CD4-positive, alpha-beta memory T cell (primary cell): ENCODE measurements at regions of chr15 and their contacts with region 1.

Region 1: GRCh38 chr15:85412956-85413854 is 32.8 kb downstream of the AKAP13 start:
- DNase-seq: peak; percentile 45 to 86 (median 54)
- H3K4me3 ChIP-seq: no peak overlapping the region
- H3K4me3 Mint-ChIP-seq: peak overlapping the region in 7 of 8 donors; percentile 47 to 87 (median 65)
- H3K27ac ChIP-seq: peak overlapping the region; percentile 40
- H3K27ac Mint-ChIP-seq: peak overlapping the region; percentile 78 to 96 (median 92)
- H3K4me1 ChIP-seq: peaks cover 32% of the 10 kb centered on the region
- H3K4me1 Mint-ChIP-seq: peaks cover 50 to 75% (median 58%) of the 10 kb centered on the region in 4 donors
- H3K27me3 ChIP-seq: no peaks in the 10 kb centered on the region
- H3K27me3 Mint-ChIP-seq: no peaks in the 10 kb centered on the region

Region 2: GRCh38 chr15:85168642-85169173 is 244.5 kb before region 1 on chr15:
- CTCF ChIA-PET with region 1: no interaction called
- POLR2A ChIA-PET with region 1: no interaction called
- intact Hi-C with region 1: no loop called
- DNase-seq: peak; percentile 22 to 57 (median 39)
- H3K4me3 ChIP-seq: peak overlapping the region in 1 of 2 donors; percentile 16
- H3K4me3 Mint-ChIP-seq: peak overlapping the region; percentile 25 to 64 (median 56)
- H3K27ac ChIP-seq: no peak overlapping the region
- H3K27ac Mint-ChIP-seq: no peak overlapping the region
- H3K4me1 ChIP-seq: peaks cover 9% of the 10 kb centered on the region
- H3K4me1 Mint-ChIP-seq: peaks cover 2 to 11% (median 6%) of the 10 kb centered on the region in 4 donors
- H3K27me3 ChIP-seq: no peaks in the 10 kb centered on the region
- H3K27me3 Mint-ChIP-seq: peaks cover 24% of the 10 kb centered on the region in 2 donors

Region 3: GRCh38 chr15:85289677-85290365 is 123.4 kb before region 1 on chr15:
- CTCF ChIA-PET with region 1: interaction called, 113 read pairs
- POLR2A ChIA-PET with region 1: interaction called, 3 read pairs
- intact Hi-C with region 1: no loop called
- DNase-seq: peak in 4 of 5 donors; percentile 2 to 27 (median 18)
- H3K4me3 ChIP-seq: no peak overlapping the region
- H3K4me3 Mint-ChIP-seq: no peak overlapping the region
- H3K27ac ChIP-seq: no peak overlapping the region
- H3K27ac Mint-ChIP-seq: no peak overlapping the region
- H3K4me1 ChIP-seq: no peaks in the 10 kb centered on the region
- H3K4me1 Mint-ChIP-seq: no peaks in the 10 kb centered on the region
- H3K27me3 ChIP-seq: no peaks in the 10 kb centered on the region
- H3K27me3 Mint-ChIP-seq: peaks cover 5 to 9% of the 10 kb centered on the region in 2 donors

Region 4: DNA sequence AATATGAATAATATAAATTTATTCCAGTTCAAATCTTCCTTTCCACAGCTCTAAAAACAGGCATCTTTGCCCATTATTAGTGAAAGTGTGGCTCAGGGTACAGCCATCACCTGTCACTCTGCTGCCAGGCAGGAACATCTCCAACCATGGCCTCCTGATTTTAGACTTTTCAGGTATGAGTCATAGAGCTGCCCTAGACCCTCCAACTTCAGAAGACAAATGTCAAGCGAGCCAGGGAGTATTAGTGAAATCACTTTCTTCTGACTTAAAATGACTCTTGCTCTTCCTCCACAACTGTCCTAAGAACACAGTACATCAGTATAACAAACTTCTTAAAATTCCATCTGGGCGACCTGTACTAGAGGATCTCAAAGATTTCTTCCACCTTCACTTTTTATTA is 110.9 kb before region 1 on chr15:
- CTCF ChIA-PET with region 1: interaction called, 113 read pairs
- POLR2A ChIA-PET with region 1: interaction called, 19 read pairs
- intact Hi-C with region 1: no loop called
- DNase-seq: no peak
- H3K4me3 ChIP-seq: no peak overlapping the region
- H3K4me3 Mint-ChIP-seq: no peak overlapping the region
- H3K27ac ChIP-seq: no peak overlapping the region
- H3K27ac Mint-ChIP-seq: no peak overlapping the region
- H3K4me1 ChIP-seq: no peaks in the 10 kb centered on the region
- H3K4me1 Mint-ChIP-seq: peaks cover 0 to 5% (median 3%) of the 10 kb centered on the region in 4 donors
- H3K27me3 ChIP-seq: no peaks in the 10 kb centered on the region
- H3K27me3 Mint-ChIP-seq: no peaks in the 10 kb centered on the region

Region 5: GRCh38 chr15:85318048-85318731 is 95.0 kb before region 1 on chr15:
- CTCF ChIA-PET with region 1: interaction called, 7 read pairs
- POLR2A ChIA-PET with region 1: interaction called, 3 read pairs
- intact Hi-C with region 1: loop called (anchors 5 kb)
- DNase-seq: peak in 3 of 5 donors; percentile 10 to 49 (median 29)
- H3K4me3 ChIP-seq: no peak overlapping the region
- H3K4me3 Mint-ChIP-seq: peak overlapping the region in 4 of 8 donors; percentile 35 to 62 (median 51)
- H3K27ac ChIP-seq: no peak overlapping the region
- H3K27ac Mint-ChIP-seq: peak overlapping the region in 6 of 7 donors; percentile 79 to 90 (median 82)
- H3K4me1 ChIP-seq: peaks cover 42% of the 10 kb centered on the region
- H3K4me1 Mint-ChIP-seq: peaks cover 32 to 47% (median 38%) of the 10 kb centered on the region in 4 donors
- H3K27me3 ChIP-seq: no peaks in the 10 kb centered on the region
- H3K27me3 Mint-ChIP-seq: no peaks in the 10 kb centered on the region

Region 6: GRCh38 chr15:85451099-85451700 is 38.0 kb after region 1 on chr15:
- CTCF ChIA-PET with region 1: no interaction called
- POLR2A ChIA-PET with region 1: no interaction called
- intact Hi-C with region 1: no loop called
- DNase-seq: no peak
- H3K4me3 ChIP-seq: no peak overlapping the region
- H3K4me3 Mint-ChIP-seq: peak overlapping the region in 3 of 8 donors; percentile 9 to 36 (median 34)
- H3K27ac ChIP-seq: no peak overlapping the region
- H3K27ac Mint-ChIP-seq: peak overlapping the region in 3 of 7 donors; percentile 27 to 54 (median 38)
- H3K4me1 ChIP-seq: peaks cover 21% of the 10 kb centered on the region
- H3K4me1 Mint-ChIP-seq: peaks cover 59 to 85% (median 71%) of the 10 kb centered on the region in 4 donors
- H3K27me3 ChIP-seq: no peaks in the 10 kb centered on the region
- H3K27me3 Mint-ChIP-seq: no peaks in the 10 kb centered on the region